MCF 10A (cell line): ENCODE measurements at regions of chr11 and their contacts with region 1.

Region 1: GRCh38 chr11:1515082-1516060 is 28.8 kb upstream of the MOB2 start:
- DNase-seq: peak; percentile 53
- H3K4me3 Mint-ChIP-seq: no peak overlapping the region
- H3K27ac Mint-ChIP-seq: no peak overlapping the region
- H3K4me1 Mint-ChIP-seq: peaks cover 27% of the 10 kb centered on the region
- H3K27me3 Mint-ChIP-seq: no peaks in the 10 kb centered on the region
- CTCF ChIP-seq: peak; percentile 89

Region 2: GRCh38 chr11:1113405-1114201 is 401.8 kb before region 1 on chr11:
- CTCF ChIA-PET with region 1: no interaction called
- POLR2A ChIA-PET with region 1: no interaction called
- intact Hi-C with region 1: loop called (anchors 5 kb)
- DNase-seq: no peak
- H3K4me3 Mint-ChIP-seq: no peak overlapping the region
- H3K27ac Mint-ChIP-seq: no peak overlapping the region
- H3K4me1 Mint-ChIP-seq: peaks cover 6% of the 10 kb centered on the region
- H3K27me3 Mint-ChIP-seq: peaks cover 23% of the 10 kb centered on the region
- CTCF ChIP-seq: no peak

Region 3: DNA sequence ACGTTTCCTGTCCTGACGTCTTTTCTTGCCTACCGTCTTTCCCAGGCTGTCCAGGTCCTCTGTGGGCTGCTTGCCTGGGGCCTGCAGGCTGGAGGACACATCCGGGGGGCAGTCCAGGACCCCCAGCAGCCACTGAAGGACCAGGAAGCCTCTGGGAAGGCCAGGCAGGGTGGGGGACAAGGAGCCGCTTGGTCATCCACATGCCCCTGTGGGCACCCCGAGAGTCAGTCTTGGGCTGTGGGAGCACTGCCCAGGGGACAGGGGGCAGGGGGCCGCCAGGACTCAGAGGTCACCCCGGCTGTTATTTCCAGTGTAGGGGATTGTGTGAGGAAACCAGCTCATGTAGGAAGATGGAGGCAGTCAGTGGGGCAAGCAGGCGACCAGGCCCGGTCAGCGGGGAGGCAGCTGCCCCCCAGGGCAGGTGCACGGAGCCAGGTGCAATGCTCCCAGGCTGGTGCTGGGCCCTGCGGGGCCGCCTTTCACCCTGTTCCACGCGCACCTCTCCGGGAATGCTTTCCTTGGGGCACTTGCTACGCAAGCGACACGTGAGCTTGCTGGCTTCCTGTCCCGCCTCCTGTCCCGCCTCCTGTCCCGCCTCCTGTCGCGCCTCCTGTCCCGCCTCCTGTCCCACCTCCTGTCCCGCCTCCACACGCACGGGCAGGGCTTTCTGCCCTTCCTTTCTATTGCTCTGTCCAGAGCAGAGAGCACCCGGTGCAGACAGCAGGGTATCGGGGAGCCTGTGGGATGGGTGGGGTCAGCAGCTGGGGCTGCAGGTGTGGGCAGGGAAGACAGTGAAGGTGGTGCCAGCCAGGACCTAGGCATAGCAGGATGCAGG is 253.0 kb before region 1 on chr11:
- CTCF ChIA-PET with region 1: interaction called, 3 read pairs
- POLR2A ChIA-PET with region 1: interaction called, 3 read pairs
- intact Hi-C with region 1: loop called (anchors 2 kb)
- DNase-seq: peak; percentile 91
- H3K4me3 Mint-ChIP-seq: peak overlapping the region; percentile 73
- H3K27ac Mint-ChIP-seq: peak overlapping the region; percentile 42
- H3K4me1 Mint-ChIP-seq: peaks cover 10% of the 10 kb centered on the region
- H3K27me3 Mint-ChIP-seq: no peaks in the 10 kb centered on the region
- CTCF ChIP-seq: no peak

Region 4: GRCh38 chr11:1272531-1272930 is 242.8 kb before region 1 on chr11:
- CTCF ChIA-PET with region 1: no interaction called
- POLR2A ChIA-PET with region 1: no interaction called
- intact Hi-C with region 1: no loop called
- DNase-seq: no peak
- H3K4me3 Mint-ChIP-seq: no peak overlapping the region
- H3K27ac Mint-ChIP-seq: no peak overlapping the region
- H3K4me1 Mint-ChIP-seq: no peaks in the 10 kb centered on the region
- H3K27me3 Mint-ChIP-seq: no peaks in the 10 kb centered on the region
- CTCF ChIP-seq: no peak

Region 5: DNA sequence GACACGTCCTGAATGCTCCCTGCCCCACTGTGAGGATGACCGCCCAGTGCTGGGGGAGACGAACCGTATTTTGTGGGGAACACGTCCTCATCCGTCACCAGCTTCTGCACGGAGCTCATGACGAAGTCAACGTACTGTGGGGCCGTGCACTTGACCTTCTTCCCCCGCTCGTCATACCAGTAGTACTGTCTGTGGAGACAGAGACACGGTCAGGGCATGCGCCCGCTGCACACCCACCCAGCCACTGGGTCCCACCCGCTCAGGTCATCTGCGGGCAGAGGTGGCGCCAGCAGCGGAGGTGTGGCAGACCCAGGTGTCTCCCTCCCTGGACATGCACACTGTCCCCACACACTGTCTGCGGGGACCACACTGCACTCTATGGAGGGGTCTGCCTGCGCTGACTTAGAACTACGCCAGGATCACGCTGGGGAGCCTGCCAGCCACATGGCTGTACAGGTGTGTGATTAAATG is 44.1 kb before region 1 on chr11:
- CTCF ChIA-PET with region 1: no interaction called
- POLR2A ChIA-PET with region 1: no interaction called
- intact Hi-C with region 1: no loop called
- DNase-seq: no peak
- H3K4me3 Mint-ChIP-seq: no peak overlapping the region
- H3K27ac Mint-ChIP-seq: no peak overlapping the region
- H3K4me1 Mint-ChIP-seq: no peaks in the 10 kb centered on the region
- H3K27me3 Mint-ChIP-seq: no peaks in the 10 kb centered on the region
- CTCF ChIP-seq: no peak

Region 6: GRCh38 chr11:1486114-1486825 is 29.1 kb before region 1 on chr11 and contains the start of gene MOB2:
- CTCF ChIA-PET with region 1: no interaction called
- POLR2A ChIA-PET with region 1: no interaction called
- intact Hi-C with region 1: no loop called
- DNase-seq: no peak
- H3K4me3 Mint-ChIP-seq: no peak within 1 kb of the TSS
- H3K27ac Mint-ChIP-seq: peak within 1 kb of the TSS; percentile 30
- H3K4me1 Mint-ChIP-seq: peaks cover 6% of the 10 kb centered on the region
- H3K27me3 Mint-ChIP-seq: no peaks in the 10 kb centered on the region
- CTCF ChIP-seq: no peak
- total RNA-seq, gene MOB2: 20.1 and 20.2 TPM in 2 replicates

Region 7: GRCh38 chr11:1526785-1527184 is 11.4 kb after region 1 on chr11:
- CTCF ChIA-PET with region 1: interaction called, 21 read pairs
- POLR2A ChIA-PET with region 1: no interaction called
- intact Hi-C with region 1: no loop called
- DNase-seq: no peak
- H3K4me3 Mint-ChIP-seq: no peak overlapping the region
- H3K27ac Mint-ChIP-seq: no peak overlapping the region
- H3K4me1 Mint-ChIP-seq: peaks cover 7% of the 10 kb centered on the region
- H3K27me3 Mint-ChIP-seq: no peaks in the 10 kb centered on the region
- CTCF ChIP-seq: no peak

Region 8: DNA sequence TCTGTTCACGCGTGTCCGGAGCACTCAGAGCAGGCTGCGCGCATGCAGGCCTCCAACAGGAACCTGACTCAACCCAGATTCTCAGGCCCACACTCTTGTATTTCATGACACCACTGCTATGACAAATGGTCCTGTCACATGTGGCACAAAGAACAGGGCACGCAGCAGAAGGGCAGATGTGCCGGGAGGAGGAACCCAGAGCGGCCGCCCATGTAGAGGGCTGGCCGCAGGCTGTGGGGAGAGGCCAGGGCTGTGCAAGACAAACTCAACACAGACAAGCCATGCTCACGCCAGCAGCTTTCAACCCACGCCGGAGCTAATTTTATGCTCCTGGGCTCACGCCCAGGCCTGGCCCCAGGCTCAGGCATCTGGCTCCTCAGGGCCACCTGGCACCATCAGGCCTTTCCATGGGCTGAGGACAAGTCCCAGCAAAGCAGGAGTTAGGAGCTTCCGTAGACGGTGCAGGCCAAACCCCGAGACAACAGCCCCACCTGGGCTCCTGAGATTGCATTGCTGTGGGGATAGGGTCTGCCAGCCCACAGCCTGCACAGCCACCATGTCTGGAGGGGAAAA is 16.7 kb after region 1 on chr11:
- CTCF ChIA-PET with region 1: interaction called, 21 read pairs
- POLR2A ChIA-PET with region 1: interaction called, 3 read pairs
- intact Hi-C with region 1: no loop called
- DNase-seq: peak; percentile 45
- H3K4me3 Mint-ChIP-seq: peak overlapping the region; percentile 23
- H3K27ac Mint-ChIP-seq: peak overlapping the region; percentile 82
- H3K4me1 Mint-ChIP-seq: peaks cover 36% of the 10 kb centered on the region
- H3K27me3 Mint-ChIP-seq: no peaks in the 10 kb centered on the region
- CTCF ChIP-seq: no peak